Breast epithelium (tissue), 4 donors: ENCODE measurements at regions of chr1 and their contacts with region 1.

Region 1: DNA sequence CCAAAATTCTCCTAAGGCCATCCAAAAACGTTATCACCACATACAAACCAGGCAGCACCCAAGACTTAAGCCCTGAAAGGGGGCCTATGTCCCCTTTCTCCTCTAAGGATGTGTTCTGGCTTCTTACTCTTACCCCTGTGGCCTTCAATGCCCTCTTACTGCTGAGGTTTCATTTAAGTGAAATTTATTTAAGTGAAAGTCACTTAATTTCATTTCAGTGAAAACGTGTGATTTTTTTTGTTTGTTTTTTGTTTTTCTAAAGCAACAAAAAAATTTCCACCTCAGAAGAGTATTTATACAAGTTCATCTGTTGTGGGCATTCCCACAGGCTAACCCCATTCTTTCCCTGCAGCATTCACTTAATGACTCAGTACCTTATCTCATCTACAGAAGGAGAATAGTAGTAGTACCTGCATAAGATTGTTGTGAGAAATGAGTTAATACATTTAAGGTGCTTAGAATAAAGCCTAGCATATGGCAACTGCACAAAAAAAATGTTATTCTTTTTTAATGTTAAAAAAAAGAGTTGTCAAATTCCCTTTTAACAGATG is 220.6 kb downstream of the CHRM3 start:
- DNase-seq: no peak
- H3K4me3 ChIP-seq: no peak overlapping the region
- H3K27ac ChIP-seq: no peak overlapping the region
- H3K4me1 ChIP-seq: no peaks in the 10 kb centered on the region
- H3K27me3 ChIP-seq: no peaks in the 10 kb centered on the region
- CTCF ChIP-seq: no peak
- POLR2A ChIP-seq: no peak

Region 2: GRCh38 chr1:238777551-238777950 is 829.4 kb before region 1 on chr1:
- intact Hi-C with region 1: loop called (anchors 10 kb)
- DNase-seq: no peak
- H3K4me3 ChIP-seq: no peak overlapping the region
- H3K27ac ChIP-seq: no peak overlapping the region
- H3K4me1 ChIP-seq: no peaks in the 10 kb centered on the region
- H3K27me3 ChIP-seq: no peaks in the 10 kb centered on the region
- CTCF ChIP-seq: no peak
- POLR2A ChIP-seq: no peak

Region 3: DNA sequence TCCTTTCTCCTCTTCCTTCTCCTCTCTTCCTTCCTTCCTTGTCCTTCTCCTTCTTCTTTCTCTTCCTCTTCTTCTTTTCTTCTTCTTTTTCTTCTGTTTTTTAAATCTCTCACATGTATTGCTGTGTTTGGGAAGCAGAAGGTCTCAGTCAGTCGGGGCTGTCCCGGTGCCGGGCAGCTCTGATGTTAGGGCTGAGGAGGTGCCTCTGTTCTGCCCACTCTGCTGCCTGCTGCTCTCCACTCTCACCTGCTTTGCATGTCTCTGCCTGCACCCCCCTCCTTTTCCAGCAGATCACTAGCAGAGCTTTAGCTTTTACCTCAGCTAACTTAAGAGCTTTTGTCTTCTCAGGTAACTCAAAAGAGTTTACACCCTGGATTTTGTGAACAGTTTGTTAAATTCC is 56.0 kb after region 1 on chr1:
- intact Hi-C with region 1: loop called (anchors 2 kb)
- DNase-seq: no peak
- H3K4me3 ChIP-seq: no peak overlapping the region
- H3K27ac ChIP-seq: no peak overlapping the region
- H3K4me1 ChIP-seq: no peaks in the 10 kb centered on the region
- H3K27me3 ChIP-seq: no peaks in the 10 kb centered on the region
- CTCF ChIP-seq: no peak
- POLR2A ChIP-seq: no peak